HEK293 (cell line): ENCODE measurements at regions of chr11 and their contacts with region 1.

Region 1: GRCh38 chr11:65779851-65780577 is 762 bp downstream of the AP5B1 start:
- H3K4me3 ChIP-seq: peak overlapping the region; percentile 76
- H3K27ac ChIP-seq: peak overlapping the region; percentile 90
- H3K4me1 ChIP-seq: no peaks in the 10 kb centered on the region
- CTCF ChIP-seq: peak; percentile 47; the same call in 1 of the 2 replicates

Region 2: GRCh38 chr11:65586676-65587075 is 193.3 kb before region 1 on chr11:
- CTCF ChIA-PET with region 1: no interaction called
- POLR2A ChIA-PET with region 1: no interaction called
- H3K4me3 ChIP-seq: no peak overlapping the region
- H3K27ac ChIP-seq: no peak overlapping the region
- H3K4me1 ChIP-seq: no peaks in the 10 kb centered on the region
- CTCF ChIP-seq: no peak

Region 3: GRCh38 chr11:65720237-65720934 is 59.6 kb before region 1 on chr11 and contains the start of gene RNASEH2C:
- CTCF ChIA-PET with region 1: interaction called, 6 read pairs
- POLR2A ChIA-PET with region 1: interaction called, 23 read pairs
- H3K4me3 ChIP-seq: peak within 1 kb of the TSS; percentile 90
- H3K27ac ChIP-seq: peak within 1 kb of the TSS; percentile 76
- H3K4me1 ChIP-seq: no peaks in the 10 kb centered on the region
- CTCF ChIP-seq: no peak

Region 4: GRCh38 chr11:65766535-65766934 is 13.5 kb before region 1 on chr11:
- CTCF ChIA-PET with region 1: interaction called, 42 read pairs
- POLR2A ChIA-PET with region 1: interaction called, 4 read pairs
- H3K4me3 ChIP-seq: no peak overlapping the region
- H3K27ac ChIP-seq: no peak overlapping the region
- H3K4me1 ChIP-seq: no peaks in the 10 kb centered on the region
- CTCF ChIP-seq: no peak

Region 5: DNA sequence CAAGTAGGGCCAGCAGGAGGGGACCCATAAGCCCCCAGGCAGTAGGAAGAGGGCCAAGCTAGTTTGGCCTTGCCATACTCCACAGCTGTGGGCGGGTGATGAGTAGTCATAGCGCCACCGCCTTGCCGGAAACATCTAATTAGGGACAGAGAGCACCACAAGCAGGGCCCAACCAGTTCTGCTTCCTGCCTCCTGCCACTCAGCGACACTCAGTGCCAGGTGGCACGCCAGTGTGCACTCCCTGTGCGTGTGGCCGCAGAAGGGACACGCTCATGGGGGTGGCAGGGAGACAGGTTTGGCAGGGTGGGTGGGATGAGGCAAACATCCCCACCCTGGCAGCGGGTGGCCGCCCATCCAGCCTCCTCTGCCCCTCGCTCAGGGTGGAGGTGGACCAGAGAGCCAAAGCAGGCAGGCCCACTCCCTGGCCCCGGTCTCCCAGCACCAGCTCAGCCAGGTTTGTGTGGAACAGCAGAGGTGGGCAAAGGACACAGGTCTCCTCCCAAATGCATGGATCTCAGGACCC is 11.7 kb after region 1 on chr11:
- CTCF ChIA-PET with region 1: interaction called, 14 read pairs
- POLR2A ChIA-PET with region 1: no interaction called
- H3K4me3 ChIP-seq: no peak overlapping the region
- H3K27ac ChIP-seq: no peak overlapping the region
- H3K4me1 ChIP-seq: no peaks in the 10 kb centered on the region
- CTCF ChIP-seq: no peak

Region 6: GRCh38 chr11:65802841-65803240 is 22.8 kb after region 1 on chr11:
- CTCF ChIA-PET with region 1: interaction called, 14 read pairs
- POLR2A ChIA-PET with region 1: no interaction called
- H3K4me3 ChIP-seq: no peak overlapping the region
- H3K27ac ChIP-seq: no peak overlapping the region
- H3K4me1 ChIP-seq: no peaks in the 10 kb centered on the region
- CTCF ChIP-seq: no peak

Region 7: DNA sequence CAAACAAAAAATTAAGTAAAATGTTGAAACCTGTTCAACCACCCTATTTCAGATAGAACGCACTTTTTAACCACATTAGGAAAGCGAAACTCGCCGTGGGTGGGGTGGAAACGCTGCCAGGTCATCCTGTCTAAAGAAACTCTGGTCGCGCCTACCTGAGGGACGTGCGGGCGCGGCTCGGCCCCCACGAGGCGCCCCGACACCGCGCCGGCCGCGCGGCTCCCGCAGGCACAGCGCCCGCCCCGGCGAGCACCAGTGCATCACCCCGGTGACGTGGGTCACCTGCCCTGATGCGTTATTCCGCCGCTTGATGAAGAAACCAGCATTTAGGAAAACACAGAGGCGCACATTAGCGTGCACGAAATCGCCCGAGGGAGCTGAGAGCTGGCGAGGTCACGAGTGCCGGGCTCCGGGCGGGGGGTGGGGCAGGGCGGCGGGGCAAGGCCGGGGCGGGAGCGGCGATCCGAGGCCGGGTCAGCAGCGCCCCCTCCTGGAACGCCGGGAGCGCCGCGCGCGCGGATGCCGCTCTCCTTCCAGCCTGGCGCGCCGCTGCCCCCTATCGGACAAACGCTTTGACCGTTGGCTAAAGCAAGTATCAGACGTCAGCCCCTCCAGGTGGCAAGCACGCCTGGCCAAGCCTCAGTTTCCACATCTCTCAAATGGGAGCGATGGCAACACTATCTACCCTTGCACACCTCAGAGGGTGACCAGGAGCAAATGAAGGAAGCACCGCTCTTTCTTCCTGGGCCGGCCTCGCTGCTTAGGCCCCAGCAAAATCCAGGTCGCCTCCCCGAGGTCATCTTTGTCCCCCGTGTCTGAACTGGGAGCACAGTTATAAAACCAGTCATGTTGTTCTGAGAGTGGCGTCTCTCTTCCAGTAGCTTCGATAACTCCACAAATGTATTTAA is 38.1 kb after region 1 on chr11:
- CTCF ChIA-PET with region 1: interaction called, 45 read pairs
- POLR2A ChIA-PET with region 1: interaction called, 6 read pairs
- H3K4me3 ChIP-seq: peak overlapping the region; percentile 66
- H3K27ac ChIP-seq: peak overlapping the region; percentile 45; the same call in 1 of the 2 replicates
- H3K4me1 ChIP-seq: no peaks in the 10 kb centered on the region; the same call in 1 of the 2 replicates
- CTCF ChIP-seq: peak; percentile 92

Region 8: GRCh38 chr11:65844231-65845190 is 64.5 kb after region 1 on chr11:
- CTCF ChIA-PET with region 1: no interaction called
- POLR2A ChIA-PET with region 1: no interaction called
- H3K4me3 ChIP-seq: no peak overlapping the region
- H3K27ac ChIP-seq: no peak overlapping the region
- H3K4me1 ChIP-seq: no peaks in the 10 kb centered on the region
- CTCF ChIP-seq: no peak